Thyroid gland (tissue), 4 donors: ENCODE measurements at regions of chr3 and their contacts with region 1.

Region 1: GRCh38 chr3:131231710-131232389 is 149.7 kb upstream of the NUDT16 start:
- DNase-seq: no peak
- H3K4me3 ChIP-seq: no peak overlapping the region
- H3K27ac ChIP-seq: no peak overlapping the region
- H3K4me1 ChIP-seq: no peaks in the 10 kb centered on the region
- H3K27me3 ChIP-seq: no peaks in the 10 kb centered on the region
- CTCF ChIP-seq: peak in 2 of 6 experiments; percentile 35 to 50
- POLR2A ChIP-seq: no peak

Region 2: GRCh38 chr3:131020122-131020693 is 211.6 kb before region 1 on chr3:
- intact Hi-C with region 1: no loop called
- DNase-seq: no peak
- H3K4me3 ChIP-seq: no peak overlapping the region
- H3K27ac ChIP-seq: no peak overlapping the region
- H3K4me1 ChIP-seq: peaks cover under 1 to 13% of the 10 kb centered on the region in 2 donors
- H3K27me3 ChIP-seq: no peaks in the 10 kb centered on the region
- CTCF ChIP-seq: no peak
- POLR2A ChIP-seq: no peak

Region 3: GRCh38 chr3:131502530-131503245 is 270.8 kb after region 1 on chr3 and contains the start of gene MRPL3:
- intact Hi-C with region 1: loop called (anchors 10 kb)
- DNase-seq: peak; percentile 83 to 85
- H3K4me3 ChIP-seq: peak within 1 kb of the TSS; percentile 33 to 90 (median 68)
- H3K27ac ChIP-seq: peak within 1 kb of the TSS in 2 of 3 donors; percentile 62 to 66
- H3K4me1 ChIP-seq: peaks cover 15% of the 10 kb centered on the region in 2 donors
- H3K27me3 ChIP-seq: no peaks in the 10 kb centered on the region
- CTCF ChIP-seq: no peak
- POLR2A ChIP-seq: peak in 1 of 2 donors; percentile 55
- total RNA-seq, gene MRPL3: 96.6 to 128 (median 111) TPM